Stomach (tissue), 19 donors: ENCODE measurements at regions of chr9 and their contacts with region 1.

Region 1: DNA sequence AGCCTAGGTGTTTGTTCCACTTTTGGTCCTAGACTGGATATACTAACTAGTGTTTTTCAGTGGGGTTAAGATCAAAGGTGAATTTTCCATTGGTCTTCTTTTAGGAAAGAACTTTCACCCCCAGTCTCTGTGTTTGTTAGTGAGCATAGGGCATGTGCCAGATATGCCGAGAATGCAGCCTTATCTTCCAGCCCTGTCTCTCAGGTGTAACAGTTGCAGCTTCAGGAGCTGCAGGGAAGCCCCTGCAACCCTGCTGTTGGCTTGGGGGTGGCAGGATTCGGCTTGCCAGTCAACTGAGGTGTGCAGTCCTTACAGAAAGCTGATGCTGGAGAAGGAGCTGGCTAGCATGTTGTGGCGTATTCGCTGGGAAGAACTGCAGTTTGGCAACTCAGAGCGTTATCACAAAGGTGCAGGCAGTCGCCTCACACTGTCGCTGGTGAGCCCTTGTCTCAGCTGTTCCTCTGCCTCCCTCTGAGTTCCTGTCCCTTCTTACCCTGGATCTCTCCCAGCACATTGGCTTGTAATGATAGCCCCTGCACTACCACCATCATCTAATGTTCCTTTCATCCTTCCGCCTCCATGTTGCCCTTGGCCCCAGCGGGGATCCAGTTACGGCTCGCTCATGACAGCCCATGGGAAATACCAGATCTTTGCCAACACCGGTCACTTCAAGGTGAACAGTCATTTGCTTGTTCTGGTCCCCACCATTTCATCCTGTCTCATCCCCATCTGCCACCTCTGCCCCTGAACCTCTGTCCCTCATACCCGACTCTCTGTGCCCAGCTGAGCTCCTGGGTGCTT is 10.1 kb downstream of the NPR2 start:
- DNase-seq: no peak
- H3K4me3 ChIP-seq: no peak overlapping the region
- H3K27ac ChIP-seq: no peak overlapping the region
- H3K4me1 ChIP-seq: peaks cover 0 to 17% (median 0%) of the 10 kb centered on the region in 4 donors
- H3K27me3 ChIP-seq: no peaks in the 10 kb centered on the region
- CTCF ChIP-seq: no peak
- EP300 ChIP-seq: no peak
- POLR2A ChIP-seq: no peak

Region 2: DNA sequence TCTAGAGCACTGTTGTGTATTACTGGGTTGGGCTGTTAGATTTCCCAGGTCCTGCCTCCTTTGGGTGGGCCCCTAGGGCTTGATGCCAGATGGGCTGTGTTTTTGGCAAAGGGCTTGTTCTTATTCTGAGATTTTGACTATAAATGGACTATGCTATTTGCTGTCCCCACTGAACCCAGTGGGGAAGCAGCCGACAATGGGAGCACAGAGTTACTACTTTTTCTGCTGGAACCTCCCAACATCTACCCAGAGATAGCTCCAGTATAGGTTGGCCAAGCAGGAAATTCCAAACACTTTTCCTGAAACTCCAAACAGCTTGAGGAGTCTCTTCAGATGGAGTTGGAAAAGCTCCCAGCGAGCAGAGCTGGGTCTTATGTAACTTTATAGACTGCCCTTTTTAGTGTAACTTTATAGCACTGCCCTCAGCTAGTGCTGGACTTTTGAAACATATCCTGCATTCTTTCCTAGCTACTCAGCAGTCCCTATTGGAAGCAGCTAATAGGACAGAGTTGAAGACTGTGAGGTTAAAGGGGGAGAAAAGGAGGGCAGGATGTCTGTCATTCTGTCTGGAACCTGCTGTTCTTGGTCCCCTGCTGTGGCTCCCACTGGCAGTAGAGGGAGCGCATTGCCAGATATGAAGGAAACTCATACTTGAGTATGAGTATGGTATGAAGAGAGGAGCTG is 290.6 kb before region 1 on chr9:
- intact Hi-C with region 1: no loop called
- DNase-seq: peak; percentile 51 to 86
- H3K4me3 ChIP-seq: no peak overlapping the region
- H3K27ac ChIP-seq: peak overlapping the region; percentile 69 to 89 (median 82)
- H3K4me1 ChIP-seq: peaks cover 15 to 64% (median 22%) of the 10 kb centered on the region in 4 donors
- H3K27me3 ChIP-seq: no peaks in the 10 kb centered on the region
- CTCF ChIP-seq: peak in 2 of 7 experiments; percentile 4 to 33
- EP300 ChIP-seq: no peak
- POLR2A ChIP-seq: no peak

Region 3: DNA sequence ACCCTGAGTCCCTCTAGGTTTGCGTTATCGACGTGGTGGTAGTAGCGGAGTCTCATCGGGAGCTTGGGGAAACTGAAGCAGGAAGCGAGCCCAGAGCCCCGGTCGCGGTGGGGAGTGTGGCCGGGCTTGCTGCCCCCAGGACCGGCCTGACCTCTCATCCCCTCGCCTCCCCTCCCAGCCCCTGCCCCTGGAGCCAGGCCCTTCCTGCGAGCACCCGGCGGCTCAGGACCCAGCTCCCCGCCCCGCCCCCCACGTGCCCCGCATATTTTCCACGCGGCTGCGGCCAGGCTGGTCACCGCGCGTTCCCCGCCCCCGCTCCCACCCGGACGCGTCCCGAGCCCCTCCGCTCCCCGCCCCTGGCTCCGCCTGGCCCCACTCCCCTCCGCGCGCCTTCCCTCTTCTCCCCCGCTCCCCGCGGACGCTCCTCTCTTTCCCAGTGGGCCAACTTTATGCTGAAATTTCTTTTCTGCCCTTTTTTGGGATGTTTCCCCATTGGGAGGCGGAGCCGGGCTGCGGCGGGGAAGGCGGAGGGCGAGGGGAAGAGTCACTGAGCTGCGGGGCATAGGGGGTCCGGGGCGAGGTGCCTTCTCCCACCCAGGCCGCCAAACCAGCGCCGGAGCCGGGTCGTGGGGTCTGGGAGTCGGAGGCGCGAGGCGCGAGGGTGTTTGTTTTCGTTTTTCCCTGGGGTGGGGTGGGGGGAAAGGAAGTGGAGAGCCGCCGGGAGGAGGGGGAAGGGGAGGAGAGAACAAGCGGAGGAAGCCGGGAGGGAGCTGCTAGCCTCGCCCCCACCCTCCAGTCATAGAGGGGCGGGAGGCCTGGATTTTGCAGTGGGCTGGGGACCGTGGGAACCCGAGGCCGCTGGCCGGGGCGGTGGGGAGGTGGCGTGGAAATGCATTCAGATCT is 110.8 kb before region 1 on chr9:
- intact Hi-C with region 1: no loop called
- DNase-seq: peak; percentile 70 to 91
- H3K4me3 ChIP-seq: peak overlapping the region; percentile 65 to 75 (median 70)
- H3K27ac ChIP-seq: peak overlapping the region; percentile 92 to 97 (median 95)
- H3K4me1 ChIP-seq: peaks cover 17 to 76% (median 61%) of the 10 kb centered on the region in 4 donors
- H3K27me3 ChIP-seq: no peaks in the 10 kb centered on the region
- CTCF ChIP-seq: no peak
- EP300 ChIP-seq: no peak
- POLR2A ChIP-seq: peak in 1 of 4 donors; percentile 26

Region 4: GRCh38 chr9:35859990-35860339 is 58.4 kb after region 1 on chr9:
- intact Hi-C with region 1: loop called (anchors 10 kb)
- DNase-seq: peak in 1 of 2 donors; percentile 32
- H3K4me3 ChIP-seq: no peak overlapping the region
- H3K27ac ChIP-seq: no peak overlapping the region
- H3K4me1 ChIP-seq: peaks cover 0 to 12% (median 4%) of the 10 kb centered on the region in 4 donors
- H3K27me3 ChIP-seq: peaks cover 0 to 36% (median 16%) of the 10 kb centered on the region in 3 donors
- CTCF ChIP-seq: no peak
- EP300 ChIP-seq: no peak
- POLR2A ChIP-seq: no peak